ENCODE measurements at regions of chr7 and their contacts with region 1.

Region 1: GRCh38 chr7:12686894-12687717 is at the start of gene ARL4A:
- DNase-seq: peak; percentile 98
- ATAC-seq: peak; percentile 76
- H3K4me3 ChIP-seq: peak within 1 kb of the TSS; percentile 92
- H3K27ac ChIP-seq: peak within 1 kb of the TSS; percentile 71
- H3K4me1 ChIP-seq: peaks cover 32% of the 10 kb centered on the region
- H3K27me3 ChIP-seq: no peaks in the 10 kb centered on the region
- CTCF ChIP-seq: peak; percentile 61
- total RNA-seq, gene ARL4A: 23.7 and 25.1 TPM in 2 replicates

Region 2: GRCh38 chr7:12647364-12648219 is 39.5 kb before region 1 on chr7:
- CTCF ChIA-PET with region 1: interaction called, 12 read pairs
- POLR2A ChIA-PET with region 1: interaction called, 16 read pairs
- intact Hi-C with region 1: no loop called
- DNase-seq: peak; percentile 95
- ATAC-seq: peak; percentile 96
- H3K4me3 ChIP-seq: no peak overlapping the region; the same call in 1 of the 2 replicates
- H3K27ac ChIP-seq: peak overlapping the region; percentile 76
- H3K4me1 ChIP-seq: peaks cover 44% of the 10 kb centered on the region
- H3K27me3 ChIP-seq: no peaks in the 10 kb centered on the region
- CTCF ChIP-seq: no peak

Region 3: DNA sequence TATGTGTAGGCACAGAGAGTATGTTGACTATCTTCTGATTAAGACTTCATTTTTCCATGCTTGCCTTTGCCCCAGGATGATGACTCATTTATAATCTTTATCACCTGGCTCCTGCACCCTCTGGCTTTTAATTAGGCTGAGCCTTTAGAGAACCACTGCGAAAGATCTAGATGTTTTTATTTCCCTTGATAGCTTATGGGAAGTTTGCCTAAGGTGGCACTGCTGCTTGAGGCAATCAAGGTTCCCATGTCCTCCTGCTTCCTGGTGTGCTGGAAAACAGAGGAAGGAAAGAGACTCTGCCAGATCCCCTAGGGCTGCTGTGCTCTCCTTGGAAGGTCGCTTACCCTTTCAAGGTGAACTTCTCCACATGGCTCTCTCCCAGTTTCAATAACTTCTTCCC is 115.0 kb after region 1 on chr7:
- CTCF ChIA-PET with region 1: interaction called, 3 read pairs
- POLR2A ChIA-PET with region 1: interaction called, 4 read pairs
- intact Hi-C with region 1: loop called (anchors 1 kb)
- DNase-seq: peak; percentile 33
- ATAC-seq: peak; percentile 39
- H3K4me3 ChIP-seq: peak overlapping the region; percentile 44; the same call in 1 of the 2 replicates
- H3K27ac ChIP-seq: peak overlapping the region; percentile 60
- H3K4me1 ChIP-seq: peaks cover 41% of the 10 kb centered on the region
- H3K27me3 ChIP-seq: no peaks in the 10 kb centered on the region
- CTCF ChIP-seq: no peak

Region 4: GRCh38 chr7:12923971-12924370 is 236.9 kb after region 1 on chr7:
- CTCF ChIA-PET with region 1: no interaction called
- POLR2A ChIA-PET with region 1: interaction called, 4 read pairs
- intact Hi-C with region 1: loop called (anchors 1 kb)
- DNase-seq: peak; percentile 91
- ATAC-seq: peak; percentile 79
- H3K4me3 ChIP-seq: no peak overlapping the region
- H3K27ac ChIP-seq: no peak overlapping the region
- H3K4me1 ChIP-seq: peaks cover 28% of the 10 kb centered on the region
- H3K27me3 ChIP-seq: no peaks in the 10 kb centered on the region
- CTCF ChIP-seq: no peak

Region 5: DNA sequence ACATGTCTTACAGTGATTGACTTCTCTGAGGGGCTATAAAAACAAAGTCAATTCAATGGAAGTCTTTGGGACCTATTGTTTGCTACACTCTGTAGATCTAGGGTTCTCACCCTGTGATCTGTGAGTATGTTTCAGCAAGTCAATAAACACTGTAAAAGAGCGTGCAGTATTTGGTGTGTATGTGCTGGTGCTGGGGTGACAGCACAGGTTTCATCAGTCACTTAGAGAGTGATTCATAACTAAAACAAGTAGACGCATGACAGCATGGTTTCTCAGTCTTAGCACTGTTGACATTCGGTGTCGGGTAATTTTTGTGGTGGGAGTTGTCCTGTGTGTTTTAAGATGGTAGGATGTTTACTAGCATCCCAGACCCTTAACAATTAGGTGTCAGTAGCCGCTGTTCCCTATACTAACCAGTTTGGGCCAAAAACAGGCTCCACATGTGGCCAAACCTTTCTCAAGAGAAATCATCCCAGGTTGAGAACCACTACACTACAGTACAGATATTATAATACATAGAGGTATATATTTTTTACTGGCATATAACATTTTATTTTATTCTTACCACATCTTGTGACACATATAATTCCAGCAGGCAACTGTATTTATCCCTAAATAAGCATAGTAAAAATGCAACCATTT is 412.2 kb after region 1 on chr7:
- CTCF ChIA-PET with region 1: no interaction called
- POLR2A ChIA-PET with region 1: no interaction called
- intact Hi-C with region 1: loop called (anchors 1 kb)
- DNase-seq: peak; percentile 86
- ATAC-seq: peak; percentile 97
- H3K4me3 ChIP-seq: no peak overlapping the region
- H3K27ac ChIP-seq: peak overlapping the region; percentile 61
- H3K4me1 ChIP-seq: peaks cover 18% of the 10 kb centered on the region
- H3K27me3 ChIP-seq: no peaks in the 10 kb centered on the region
- CTCF ChIP-seq: no peak

Region 6: GRCh38 chr7:13197501-13197900 is 510.4 kb after region 1 on chr7:
- CTCF ChIA-PET with region 1: interaction called, 12 read pairs
- POLR2A ChIA-PET with region 1: no interaction called
- intact Hi-C with region 1: loop called (anchors 5 kb)
- DNase-seq: peak; percentile 78
- ATAC-seq: peak; percentile 83
- H3K4me3 ChIP-seq: no peak overlapping the region
- H3K27ac ChIP-seq: no peak overlapping the region
- H3K4me1 ChIP-seq: peaks cover 24% of the 10 kb centered on the region
- H3K27me3 ChIP-seq: no peaks in the 10 kb centered on the region
- CTCF ChIP-seq: no peak

Measured in PC-3 (cell line).